HepG2 (cell line): ENCODE measurements at regions of chr9 and their contacts with region 1.

Region 1: GRCh38 chr9:128067876-128068613 is at the start of gene SLC25A25:
- DNase-seq: peak; percentile 98
- ATAC-seq: peak; percentile 83
- H3K4me3 ChIP-seq: peak within 1 kb of the TSS; percentile 78 to 88 (median 85)
- H3K27ac ChIP-seq: peak within 1 kb of the TSS; percentile 98
- H3K4me1 ChIP-seq: peaks cover 58% of the 10 kb centered on the region
- H3K27me3 ChIP-seq: no peaks in the 10 kb centered on the region; a peak in 1 of 5 replicates
- CTCF ChIP-seq: no peak
- EP300 ChIP-seq: no peak
- POLR2A ChIP-seq: no peak; a peak in 1 of 4 replicates
- RAD21 ChIP-seq: peak; percentile 41; the same call in 1 of the 2 replicates
- total RNA-seq, gene SLC25A25: 18.5 and 24.8 TPM in 2 replicates

Region 2: DNA sequence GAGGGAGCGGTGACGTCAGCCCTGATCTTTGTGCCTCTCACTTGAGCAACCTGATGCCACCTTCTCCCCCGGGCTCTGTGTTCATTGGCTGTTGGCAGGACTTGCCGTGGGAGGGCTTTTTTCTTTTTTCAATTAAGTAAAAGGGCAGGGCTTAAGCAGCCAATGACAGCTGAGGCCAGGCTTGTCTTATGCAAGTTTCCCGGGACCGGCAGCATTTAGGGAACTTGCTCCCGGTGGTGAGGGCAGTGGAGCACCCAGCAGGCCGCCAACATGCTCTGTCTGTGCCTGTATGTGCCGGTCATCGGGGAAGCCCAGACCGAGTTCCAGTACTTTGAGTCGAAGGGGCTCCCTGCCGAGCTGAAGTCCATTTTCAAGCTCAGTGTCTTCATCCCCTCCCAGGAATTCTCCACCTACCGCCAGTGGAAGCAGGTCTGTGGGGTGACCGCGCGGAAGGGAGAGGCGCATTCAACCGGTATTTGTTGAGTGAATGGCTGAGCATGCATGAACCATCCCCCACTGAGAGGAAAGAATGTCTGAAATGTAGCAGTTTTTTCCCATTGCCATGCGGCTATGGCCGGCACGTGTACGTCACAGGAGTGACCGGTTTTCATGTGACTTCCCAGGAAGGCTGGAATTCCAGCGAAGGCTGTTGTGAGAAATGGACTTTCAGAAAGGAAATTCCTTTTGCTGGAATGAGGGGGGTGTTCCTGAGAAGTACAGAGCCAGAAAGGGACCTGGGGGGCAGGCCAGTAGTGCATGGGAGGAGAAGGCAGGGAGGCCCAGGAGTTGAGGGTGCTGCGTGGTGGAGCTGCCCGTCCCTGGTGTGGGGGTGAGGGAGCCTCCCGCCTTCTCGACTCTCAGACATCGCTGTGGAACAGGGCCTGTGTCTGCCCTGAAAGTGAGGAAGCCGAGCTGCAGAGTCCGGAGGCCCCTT is 30.5 kb after region 1 on chr9:
- CTCF ChIA-PET with region 1: no interaction called
- POLR2A ChIA-PET with region 1: interaction called, 22 read pairs
- in situ Hi-C with region 1: no loop called
- intact Hi-C with region 1: loop called (anchors 5 kb)
- DNase-seq: peak; percentile 98
- ATAC-seq: peak; percentile 75
- H3K4me3 ChIP-seq: peak overlapping the region; percentile 72 to 89 (median 76)
- H3K27ac ChIP-seq: peak overlapping the region; percentile 92
- H3K4me1 ChIP-seq: peaks cover 86% of the 10 kb centered on the region
- H3K27me3 ChIP-seq: no peaks in the 10 kb centered on the region; a peak in 1 of 5 replicates
- CTCF ChIP-seq: no peak
- EP300 ChIP-seq: peak in 1 of 2 experiments; percentile 43; a peak in 2 of 4 replicates
- POLR2A ChIP-seq: peak in 1 of 2 experiments; percentile 99; a peak in 2 of 4 replicates
- RAD21 ChIP-seq: no peak

Region 3: DNA sequence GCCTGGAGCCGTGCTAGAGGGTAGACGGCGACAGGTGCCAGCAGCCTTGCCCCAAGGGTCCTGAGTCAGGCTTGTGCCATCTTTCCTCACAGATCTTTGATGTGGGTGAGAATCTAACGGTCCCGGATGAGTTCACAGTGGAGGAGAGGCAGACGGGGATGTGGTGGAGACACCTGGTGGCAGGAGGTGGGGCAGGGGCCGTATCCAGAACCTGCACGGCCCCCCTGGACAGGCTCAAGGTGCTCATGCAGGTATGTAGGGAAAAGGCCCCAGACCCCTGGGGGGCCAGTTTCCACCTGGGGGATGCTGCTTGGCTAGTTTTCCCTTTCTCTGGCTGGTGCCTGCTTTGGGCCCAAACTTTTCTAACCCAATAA is 35.5 kb after region 1 on chr9:
- CTCF ChIA-PET with region 1: no interaction called
- POLR2A ChIA-PET with region 1: interaction called, 22 read pairs
- in situ Hi-C with region 1: no loop called
- intact Hi-C with region 1: loop called (anchors 5 kb)
- DNase-seq: peak; percentile 41
- ATAC-seq: peak; percentile 36
- H3K4me3 ChIP-seq: peak overlapping the region in 1 of 3 experiments; percentile 38; a peak in 2 of 6 replicates
- H3K27ac ChIP-seq: peak overlapping the region; percentile 90
- H3K4me1 ChIP-seq: peaks cover 91% of the 10 kb centered on the region
- H3K27me3 ChIP-seq: no peaks in the 10 kb centered on the region; a peak in 1 of 5 replicates
- CTCF ChIP-seq: peak; percentile 65
- EP300 ChIP-seq: no peak
- POLR2A ChIP-seq: no peak
- RAD21 ChIP-seq: peak; percentile 39; the same call in 1 of the 2 replicates